B cell (primary cell): ENCODE measurements at regions of chr20 and their contacts with region 1.

Region 1: DNA sequence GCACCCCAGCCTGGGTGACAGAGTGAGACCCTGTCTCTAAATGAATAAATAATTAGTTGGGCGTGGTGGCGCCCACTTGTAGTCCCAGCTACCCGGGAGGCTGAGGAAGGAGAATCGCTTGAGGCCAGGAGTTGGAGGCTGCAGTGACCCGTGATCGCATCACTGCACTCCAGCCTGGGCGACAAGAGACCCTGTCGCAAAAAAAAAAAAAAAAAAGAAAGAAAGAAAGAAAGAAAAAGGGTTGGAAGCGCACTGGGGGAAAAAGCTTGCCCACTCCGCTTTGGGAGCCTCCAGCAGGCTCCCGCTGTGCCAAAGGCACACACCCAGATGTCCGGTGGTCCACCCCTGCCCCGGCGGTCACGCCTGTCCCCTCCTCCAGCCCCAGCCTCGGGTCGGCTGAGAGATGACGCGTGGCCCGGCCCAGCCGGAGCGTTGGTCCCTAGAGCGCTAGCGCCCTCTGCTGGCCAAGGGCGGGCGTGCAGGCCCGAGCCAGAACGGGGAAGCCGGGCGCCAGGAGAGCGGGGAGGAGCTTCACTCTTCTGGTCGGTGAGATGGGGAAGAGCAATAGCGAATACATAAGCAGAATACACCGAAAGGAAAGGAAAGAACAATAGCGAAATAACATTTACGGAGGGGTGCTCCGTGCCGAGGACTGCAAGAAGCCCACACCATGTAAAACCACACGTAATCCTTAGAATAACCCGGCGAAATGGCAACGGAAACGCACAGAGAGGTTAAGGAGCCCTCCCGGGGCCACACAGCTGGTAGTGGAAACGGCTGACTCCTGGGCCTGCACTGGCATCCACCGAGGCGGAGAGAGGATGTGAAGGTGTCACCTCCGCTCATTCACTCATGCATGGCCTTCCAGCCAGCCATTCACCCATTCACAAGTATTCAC is 41.7 kb downstream of the UBE2V1 start:
- DNase-seq: peak; percentile 91
- ATAC-seq: peak; percentile 100
- H3K4me3 ChIP-seq: peak overlapping the region in 3 of 5 experiments; percentile 25 to 54 (median 40)
- H3K4me3 Mint-ChIP-seq: peak overlapping the region; percentile 15
- H3K27ac ChIP-seq: no peak overlapping the region
- H3K27ac Mint-ChIP-seq: no peak overlapping the region
- H3K4me1 ChIP-seq: peaks cover 5 to 10% of the 10 kb centered on the region in 2 donors
- H3K4me1 Mint-ChIP-seq: peaks cover 5% of the 10 kb centered on the region
- H3K27me3 ChIP-seq: no peaks in the 10 kb centered on the region
- H3K27me3 Mint-ChIP-seq: no peaks in the 10 kb centered on the region
- CTCF ChIP-seq: peak; percentile 99

Region 2: GRCh38 chr20:49821870-49822331 is 249.3 kb before region 1 on chr20:
- CTCF ChIA-PET with region 1: no interaction called
- POLR2A ChIA-PET with region 1: no interaction called
- intact Hi-C with region 1: no loop called
- DNase-seq: no peak
- ATAC-seq: peak; percentile 36
- H3K4me3 ChIP-seq: no peak overlapping the region
- H3K4me3 Mint-ChIP-seq: peak overlapping the region; percentile 6
- H3K27ac ChIP-seq: peak overlapping the region in 1 of 2 donors; percentile 72
- H3K27ac Mint-ChIP-seq: peak overlapping the region; percentile 29
- H3K4me1 ChIP-seq: peaks cover 26 to 28% of the 10 kb centered on the region in 2 donors
- H3K4me1 Mint-ChIP-seq: peaks cover 34% of the 10 kb centered on the region
- H3K27me3 ChIP-seq: no peaks in the 10 kb centered on the region
- H3K27me3 Mint-ChIP-seq: no peaks in the 10 kb centered on the region
- CTCF ChIP-seq: no peak

Region 3: DNA sequence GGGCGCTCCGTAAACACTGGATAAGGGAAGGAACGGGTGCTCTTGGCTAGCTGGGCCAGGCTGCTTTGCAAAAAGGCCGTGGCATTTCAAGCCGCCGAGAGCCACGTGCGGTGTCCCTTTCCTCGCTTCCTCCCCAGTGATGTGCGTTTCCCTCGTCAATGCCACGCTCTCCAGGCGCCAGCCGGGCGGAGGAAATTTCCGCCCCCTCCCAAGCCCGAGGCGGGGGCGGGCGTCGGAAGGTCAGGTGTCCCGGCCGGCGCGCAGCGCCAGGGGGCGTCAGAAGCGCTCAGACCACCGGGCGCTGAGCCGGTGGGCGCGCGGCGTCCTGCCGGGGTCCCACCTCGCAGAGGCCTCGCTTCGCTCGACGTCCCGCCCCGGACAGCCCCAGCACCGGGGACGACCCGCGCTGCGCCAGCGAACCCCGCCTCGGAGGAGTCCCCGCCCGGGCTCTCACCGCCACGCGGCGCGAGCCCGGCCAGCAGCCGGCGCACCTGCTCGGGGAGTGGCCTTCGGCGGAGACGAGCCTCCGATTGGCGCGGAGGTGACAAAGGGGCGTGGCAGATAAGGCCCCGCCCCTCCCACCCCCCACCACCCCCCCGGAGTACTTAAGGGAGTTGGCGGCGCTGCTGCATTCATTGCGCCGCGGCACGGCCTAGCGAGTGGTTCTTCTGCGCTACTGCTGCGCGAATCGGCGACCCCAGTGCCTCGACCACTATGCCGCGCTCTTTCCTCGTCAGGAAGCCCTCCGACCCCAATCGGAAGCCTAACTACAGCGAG is 88.7 kb before region 1 on chr20 and contains the start of gene SNAI1:
- CTCF ChIA-PET with region 1: interaction called, 531 read pairs
- POLR2A ChIA-PET with region 1: interaction called, 27 read pairs
- intact Hi-C with region 1: loop called (anchors 1 kb)
- DNase-seq: peak; percentile 92
- ATAC-seq: peak; percentile 91
- H3K4me3 ChIP-seq: peak within 1 kb of the TSS in 4 of 5 experiments; percentile 27 to 67 (median 54)
- H3K4me3 Mint-ChIP-seq: peak within 1 kb of the TSS; percentile 81
- H3K27ac ChIP-seq: peak within 1 kb of the TSS; percentile 25 to 45
- H3K27ac Mint-ChIP-seq: peak within 1 kb of the TSS; percentile 80
- H3K4me1 ChIP-seq: peaks cover 18 to 26% of the 10 kb centered on the region in 2 donors
- H3K4me1 Mint-ChIP-seq: peaks cover 24% of the 10 kb centered on the region
- H3K27me3 ChIP-seq: peaks cover 0 to 2% (median 0%) of the 10 kb centered on the region in 4 experiments
- H3K27me3 Mint-ChIP-seq: no peaks in the 10 kb centered on the region
- CTCF ChIP-seq: peak; percentile 68
- total RNA-seq, gene SNAI1: 3.5 and 4.3 TPM in 2 replicates

Region 4: DNA sequence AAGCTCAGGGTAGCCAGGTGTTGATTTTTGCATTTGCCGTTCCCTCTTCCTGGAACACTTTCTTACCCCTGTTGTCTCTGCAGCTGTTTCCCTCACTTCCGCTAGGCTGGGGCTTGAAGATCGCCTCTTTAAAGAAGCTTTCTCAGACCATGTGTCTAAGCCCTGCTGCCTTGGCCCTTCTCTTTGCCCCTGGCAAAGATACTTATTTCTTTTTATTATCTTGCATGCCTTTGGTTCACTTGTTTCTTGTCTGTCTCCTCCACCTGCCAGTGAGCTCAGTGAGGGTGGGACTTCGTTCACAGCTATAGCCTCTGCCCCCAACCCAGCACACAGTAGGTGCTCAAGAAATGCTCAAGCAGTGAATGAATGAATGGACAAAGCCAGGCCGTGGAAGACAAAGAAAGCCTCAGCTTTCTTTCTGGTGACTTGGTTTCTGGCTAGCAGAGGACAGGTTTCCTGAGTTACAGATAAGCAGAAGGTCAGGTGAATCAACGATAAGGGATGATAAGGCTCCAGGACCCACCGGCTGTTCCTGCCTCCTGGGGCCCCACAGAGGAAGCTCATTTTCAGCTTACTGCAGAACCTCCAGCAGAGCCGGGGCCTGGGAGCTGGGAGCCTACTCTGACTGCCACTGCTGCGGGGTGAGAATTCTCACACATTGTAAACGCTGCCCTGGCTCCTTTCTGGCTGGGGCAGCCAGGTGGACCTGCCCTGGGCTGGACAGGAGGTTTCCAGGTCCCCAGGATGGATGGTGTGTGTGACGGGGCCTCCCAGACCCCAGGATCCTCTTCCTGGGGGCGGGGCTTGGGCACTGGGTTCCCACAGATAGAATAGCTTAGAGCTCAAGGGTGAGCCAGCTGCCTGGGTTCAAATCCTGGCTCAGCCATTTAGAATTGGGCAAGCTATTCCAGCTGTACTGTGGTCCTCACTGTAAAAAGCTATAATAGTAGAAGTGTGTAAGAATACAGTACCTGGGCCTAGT is 58.7 kb before region 1 on chr20:
- CTCF ChIA-PET with region 1: interaction called, 34 read pairs
- POLR2A ChIA-PET with region 1: interaction called, 4 read pairs
- intact Hi-C with region 1: no loop called
- DNase-seq: peak; percentile 77
- ATAC-seq: peak; percentile 90
- H3K4me3 ChIP-seq: no peak overlapping the region
- H3K4me3 Mint-ChIP-seq: no peak overlapping the region
- H3K27ac ChIP-seq: peak overlapping the region; percentile 11 to 39
- H3K27ac Mint-ChIP-seq: peak overlapping the region; percentile 26
- H3K4me1 ChIP-seq: peaks cover 12 to 16% of the 10 kb centered on the region in 2 donors
- H3K4me1 Mint-ChIP-seq: peaks cover 14% of the 10 kb centered on the region
- H3K27me3 ChIP-seq: peaks cover 0 to 14% (median 5%) of the 10 kb centered on the region in 4 experiments
- H3K27me3 Mint-ChIP-seq: peaks cover 7% of the 10 kb centered on the region
- CTCF ChIP-seq: peak; percentile 8

Region 5: GRCh38 chr20:50058747-50059404 is 12.4 kb before region 1 on chr20:
- CTCF ChIA-PET with region 1: interaction called, 22 read pairs
- POLR2A ChIA-PET with region 1: no interaction called
- intact Hi-C with region 1: no loop called
- DNase-seq: no peak
- ATAC-seq: no peak
- H3K4me3 ChIP-seq: no peak overlapping the region
- H3K4me3 Mint-ChIP-seq: no peak overlapping the region
- H3K27ac ChIP-seq: no peak overlapping the region
- H3K27ac Mint-ChIP-seq: no peak overlapping the region
- H3K4me1 ChIP-seq: peaks cover 0 to 7% of the 10 kb centered on the region in 2 donors
- H3K4me1 Mint-ChIP-seq: peaks cover 8% of the 10 kb centered on the region
- H3K27me3 ChIP-seq: no peaks in the 10 kb centered on the region
- H3K27me3 Mint-ChIP-seq: no peaks in the 10 kb centered on the region
- CTCF ChIP-seq: no peak

Region 6: DNA sequence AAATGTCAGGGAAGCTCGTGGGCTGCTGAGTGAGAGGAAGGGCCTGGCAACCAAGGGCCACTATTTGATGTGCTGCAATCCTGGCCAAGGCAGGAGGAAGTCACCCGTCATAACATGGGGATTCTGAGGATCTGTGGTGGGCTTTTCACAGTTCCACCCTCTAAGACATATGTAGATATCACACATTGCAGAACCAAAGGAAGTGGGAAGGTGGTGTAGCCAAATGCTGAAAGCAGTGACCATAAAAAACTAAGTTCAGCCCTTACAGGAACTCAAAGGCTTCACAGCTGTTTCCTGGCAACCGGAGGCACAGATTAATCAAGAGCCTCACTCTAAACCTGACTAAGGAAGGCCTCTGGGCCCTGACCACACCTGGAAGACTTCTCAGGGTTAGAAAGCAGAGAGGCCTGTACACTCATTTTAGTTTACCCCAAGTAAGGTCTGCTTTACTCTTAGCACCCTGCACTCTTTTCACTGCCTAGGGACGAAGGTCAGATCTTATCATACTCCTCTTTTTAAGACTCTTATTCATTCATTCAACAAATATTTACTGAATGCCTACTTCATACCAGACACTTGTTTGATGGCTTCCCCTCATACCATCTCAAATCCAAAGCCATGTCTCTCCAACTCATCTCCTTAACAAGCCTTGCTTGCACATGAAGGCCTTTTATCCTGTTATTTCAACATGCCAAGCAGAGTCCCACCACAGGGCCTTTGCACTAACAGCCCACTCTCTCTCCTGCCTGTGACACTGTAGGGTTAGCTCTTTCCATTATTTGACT is 39.1 kb after region 1 on chr20:
- CTCF ChIA-PET with region 1: interaction called, 15 read pairs
- POLR2A ChIA-PET with region 1: no interaction called
- intact Hi-C with region 1: no loop called
- DNase-seq: peak; percentile 61
- ATAC-seq: peak; percentile 10
- H3K4me3 ChIP-seq: peak overlapping the region in 2 of 5 experiments; percentile 3 to 41
- H3K4me3 Mint-ChIP-seq: peak overlapping the region; percentile 88
- H3K27ac ChIP-seq: peak overlapping the region; percentile 79 to 91
- H3K27ac Mint-ChIP-seq: peak overlapping the region; percentile 90
- H3K4me1 ChIP-seq: peaks cover 63 to 67% of the 10 kb centered on the region in 2 donors
- H3K4me1 Mint-ChIP-seq: peaks cover 81% of the 10 kb centered on the region
- H3K27me3 ChIP-seq: no peaks in the 10 kb centered on the region
- H3K27me3 Mint-ChIP-seq: no peaks in the 10 kb centered on the region
- CTCF ChIP-seq: no peak

Region 7: GRCh38 chr20:50172347-50173013 is 101.2 kb after region 1 on chr20:
- CTCF ChIA-PET with region 1: interaction called, 23 read pairs
- POLR2A ChIA-PET with region 1: no interaction called
- intact Hi-C with region 1: loop called (anchors 1 kb)
- DNase-seq: peak; percentile 35
- ATAC-seq: peak; percentile 54
- H3K4me3 ChIP-seq: peak overlapping the region in 4 of 5 experiments; percentile 19 to 44 (median 38)
- H3K4me3 Mint-ChIP-seq: peak overlapping the region; percentile 55
- H3K27ac ChIP-seq: no peak overlapping the region
- H3K27ac Mint-ChIP-seq: no peak overlapping the region
- H3K4me1 ChIP-seq: peaks cover 11% of the 10 kb centered on the region in 2 donors
- H3K4me1 Mint-ChIP-seq: peaks cover 9% of the 10 kb centered on the region
- H3K27me3 ChIP-seq: peaks cover 0 to 25% (median 5%) of the 10 kb centered on the region in 4 experiments
- H3K27me3 Mint-ChIP-seq: peaks cover 18% of the 10 kb centered on the region
- CTCF ChIP-seq: no peak

Region 8: GRCh38 chr20:50267041-50267865 is 196.0 kb after region 1 on chr20:
- CTCF ChIA-PET with region 1: no interaction called
- POLR2A ChIA-PET with region 1: no interaction called
- intact Hi-C with region 1: no loop called
- DNase-seq: no peak
- ATAC-seq: no peak
- H3K4me3 ChIP-seq: no peak overlapping the region
- H3K4me3 Mint-ChIP-seq: no peak overlapping the region
- H3K27ac ChIP-seq: no peak overlapping the region
- H3K27ac Mint-ChIP-seq: no peak overlapping the region
- H3K4me1 ChIP-seq: peaks cover 0 to 5% of the 10 kb centered on the region in 2 donors
- H3K4me1 Mint-ChIP-seq: peaks cover 2% of the 10 kb centered on the region
- H3K27me3 ChIP-seq: peaks cover 0 to 13% (median under 1%) of the 10 kb centered on the region in 4 experiments
- H3K27me3 Mint-ChIP-seq: peaks cover 21% of the 10 kb centered on the region
- CTCF ChIP-seq: no peak